ENCODE measurements at regions of chr13 and their contacts with region 1.

Region 1: GRCh38 chr13:28718543-28719226 is at the start of gene SLC46A3:
- DNase-seq: peak; percentile 95
- ATAC-seq: peak; percentile 98
- H3K4me3 Mint-ChIP-seq: peak within 1 kb of the TSS; percentile 92
- H3K27ac Mint-ChIP-seq: peak within 1 kb of the TSS; percentile 92
- H3K4me1 Mint-ChIP-seq: peaks cover 23% of the 10 kb centered on the region
- H3K27me3 Mint-ChIP-seq: no peaks in the 10 kb centered on the region
- CTCF ChIP-seq: no peak
- total RNA-seq, gene SLC46A3: 8.6 and 11.8 TPM in 2 replicates

Region 2: DNA sequence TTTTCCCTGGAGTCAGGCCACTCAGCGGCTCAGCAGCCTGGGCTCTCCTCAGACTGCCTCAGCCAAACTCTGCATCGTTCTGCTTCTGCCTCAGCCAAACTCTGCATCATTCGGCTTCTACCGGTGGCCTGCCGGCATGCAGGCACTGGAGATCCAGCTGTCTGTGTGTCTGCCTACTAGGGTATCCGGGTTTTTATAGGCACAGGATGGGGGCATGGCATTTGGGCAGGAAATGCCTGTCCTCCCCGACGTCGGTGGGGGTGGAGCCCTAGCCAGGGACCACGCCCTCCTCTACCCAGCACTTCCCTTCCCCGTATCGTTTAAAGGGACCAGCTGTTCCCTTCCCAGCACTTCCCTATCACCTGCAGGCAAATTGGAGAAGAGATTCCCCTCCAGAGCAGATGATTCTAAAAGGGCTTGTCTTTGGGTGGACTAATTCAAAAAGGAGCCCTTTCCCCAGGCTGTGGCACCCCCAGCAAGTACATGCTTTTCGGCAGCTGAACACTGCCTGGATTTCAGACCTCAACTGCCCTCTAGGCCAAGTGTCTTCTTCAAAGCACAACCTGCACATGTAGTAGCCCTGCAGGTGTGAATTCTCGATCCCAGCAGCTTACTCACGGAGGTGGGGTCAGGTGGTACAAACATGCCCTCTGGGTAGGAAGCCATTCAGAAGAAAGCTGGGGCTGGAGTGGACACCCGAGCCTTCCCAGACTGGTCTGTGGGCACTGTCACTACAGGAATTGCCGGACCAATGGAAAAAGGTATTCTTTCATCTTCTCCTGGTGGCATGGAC is 1932.7 kb before region 1 on chr13:
- CTCF ChIA-PET with region 1: no interaction called
- POLR2A ChIA-PET with region 1: no interaction called
- intact Hi-C with region 1: loop called (anchors 10 kb)
- DNase-seq: peak; percentile 50
- ATAC-seq: peak; percentile 66
- H3K4me3 Mint-ChIP-seq: peak overlapping the region; percentile 86
- H3K27ac Mint-ChIP-seq: peak overlapping the region; percentile 80
- H3K4me1 Mint-ChIP-seq: peaks cover 22% of the 10 kb centered on the region
- H3K27me3 Mint-ChIP-seq: peaks cover 3% of the 10 kb centered on the region
- CTCF ChIP-seq: no peak

Region 3: GRCh38 chr13:28707629-28708427 is 10.9 kb before region 1 on chr13:
- CTCF ChIA-PET with region 1: interaction called, 3 read pairs
- POLR2A ChIA-PET with region 1: interaction called, 14 read pairs
- intact Hi-C with region 1: loop called (anchors 1 kb)
- DNase-seq: no peak
- ATAC-seq: peak; percentile 95
- H3K4me3 Mint-ChIP-seq: peak overlapping the region; percentile 3
- H3K27ac Mint-ChIP-seq: peak overlapping the region; percentile 14
- H3K4me1 Mint-ChIP-seq: peaks cover 9% of the 10 kb centered on the region
- H3K27me3 Mint-ChIP-seq: no peaks in the 10 kb centered on the region
- CTCF ChIP-seq: no peak

Measured in activated B cell treated with CpG ODN at 0.5 μM for 24 hours (primary cell).